Ascending aorta (tissue), 2 donors: ENCODE measurements at regions of chr3 and their contacts with region 1.

Region 1: GRCh38 chr3:41224120-41224806 is 25.0 kb downstream of the CTNNB1 start:
- DNase-seq: peak in 1 of 2 donors; percentile 78
- H3K4me3 ChIP-seq: no peak overlapping the region
- H3K27ac ChIP-seq: peak overlapping the region; percentile 50 to 80
- H3K4me1 ChIP-seq: peaks cover 0 to 53% of the 10 kb centered on the region in 2 donors
- H3K27me3 ChIP-seq: no peaks in the 10 kb centered on the region
- CTCF ChIP-seq: peak in 1 of 3 experiments; percentile 13

Region 2: GRCh38 chr3:40309418-40309924 is 914.8 kb before region 1 on chr3 and contains the start of gene EIF1B:
- intact Hi-C with region 1: loop called (anchors 10 kb)
- DNase-seq: peak; percentile 92 to 99
- H3K4me3 ChIP-seq: peak within 1 kb of the TSS; percentile 74
- H3K27ac ChIP-seq: peak within 1 kb of the TSS; percentile 84 to 97
- H3K4me1 ChIP-seq: peaks cover 4 to 19% of the 10 kb centered on the region in 2 donors
- H3K27me3 ChIP-seq: no peaks in the 10 kb centered on the region
- CTCF ChIP-seq: peak; percentile 79 to 89 (median 88)
- total RNA-seq, gene EIF1B: 21.7 TPM

Region 3: DNA sequence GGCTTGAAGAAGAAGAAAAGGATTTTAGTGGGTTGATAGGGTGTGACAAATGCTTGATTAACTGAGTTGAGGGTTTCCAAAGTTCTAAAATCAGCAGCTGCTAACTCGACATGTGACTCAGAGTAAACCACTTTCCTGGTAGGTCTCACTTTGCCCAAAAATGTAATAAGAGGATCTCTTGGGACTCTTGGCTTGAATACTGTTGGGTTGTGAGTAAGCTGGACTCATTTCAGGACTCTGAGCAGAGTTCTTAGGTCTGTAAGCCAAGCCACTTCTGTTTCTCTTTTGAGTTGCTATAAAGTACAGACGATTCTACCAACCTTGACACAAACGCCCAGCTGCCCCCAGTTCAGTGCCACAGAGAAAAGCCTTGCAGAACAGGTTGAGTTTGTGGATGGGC is 458.4 kb before region 1 on chr3:
- intact Hi-C with region 1: loop called (anchors 5 kb)
- DNase-seq: peak in 1 of 2 donors; percentile 71
- H3K4me3 ChIP-seq: peak overlapping the region in 1 of 2 donors; percentile 31
- H3K27ac ChIP-seq: peak overlapping the region; percentile 15 to 21
- H3K4me1 ChIP-seq: peaks cover 2 to 19% of the 10 kb centered on the region in 2 donors
- H3K27me3 ChIP-seq: no peaks in the 10 kb centered on the region
- CTCF ChIP-seq: no peak

Region 4: GRCh38 chr3:41000471-41000870 is 223.8 kb before region 1 on chr3:
- intact Hi-C with region 1: loop called (anchors 5 kb)
- DNase-seq: peak in 1 of 2 donors; percentile 83
- H3K4me3 ChIP-seq: no peak overlapping the region
- H3K27ac ChIP-seq: peak overlapping the region; percentile 58 to 62
- H3K4me1 ChIP-seq: peaks cover 0 to 22% of the 10 kb centered on the region in 2 donors
- H3K27me3 ChIP-seq: no peaks in the 10 kb centered on the region
- CTCF ChIP-seq: no peak

Region 5: DNA sequence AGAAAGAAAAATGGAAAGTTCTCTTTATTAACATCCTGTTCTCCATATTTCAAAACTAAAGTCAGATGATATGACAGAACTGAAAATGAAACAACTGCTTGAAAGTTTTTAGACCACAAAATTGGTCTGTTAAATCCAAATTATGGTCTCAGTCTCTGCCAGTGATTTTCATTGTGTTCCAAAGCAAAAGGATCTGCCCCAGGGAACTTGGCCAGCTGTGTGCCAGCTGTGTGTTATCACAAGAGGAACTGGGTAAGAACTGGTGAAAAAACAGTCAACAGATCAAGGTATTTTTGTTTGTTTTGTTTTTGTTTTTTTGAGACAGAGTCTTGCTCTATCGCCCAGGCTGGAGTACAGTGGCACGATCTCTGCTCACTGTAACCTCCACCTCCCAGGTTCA is 298.3 kb after region 1 on chr3:
- intact Hi-C with region 1: no loop called
- DNase-seq: no peak
- H3K4me3 ChIP-seq: no peak overlapping the region
- H3K27ac ChIP-seq: no peak overlapping the region
- H3K4me1 ChIP-seq: no peaks in the 10 kb centered on the region
- H3K27me3 ChIP-seq: no peaks in the 10 kb centered on the region
- CTCF ChIP-seq: no peak